Right ventricle myocardium inferior (tissue), 1 donor: ENCODE measurements at regions of chr15 and their contacts with region 1.

Region 1: GRCh38 chr15:81633889-81634288 is 259.9 kb upstream of the TMC3 start:
- DNase-seq: no peak
- ATAC-seq: no peak

Region 2: DNA sequence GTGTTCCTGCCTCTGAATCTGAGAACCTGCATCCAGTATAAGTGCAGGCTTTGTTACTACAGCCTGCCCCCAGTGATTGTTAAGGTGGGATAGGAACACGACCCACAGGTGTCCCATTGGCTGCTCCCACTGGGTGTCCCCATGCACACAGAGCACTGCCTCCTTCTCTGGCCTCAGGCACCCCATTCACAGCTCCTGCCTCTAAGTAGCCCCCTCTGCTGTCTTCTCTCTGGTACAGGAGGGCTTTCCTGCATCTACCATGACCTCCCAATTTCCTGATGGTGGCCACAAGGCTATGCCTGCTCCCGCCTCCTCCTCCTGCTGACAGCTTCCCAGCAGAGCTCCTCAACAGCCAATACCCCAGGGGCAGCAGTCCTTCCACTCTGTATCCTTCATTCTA is 21.3 kb before region 1 on chr15:
- intact Hi-C with region 1: loop called (anchors 2 kb)
- DNase-seq: no peak
- ATAC-seq: no peak

Region 3: DNA sequence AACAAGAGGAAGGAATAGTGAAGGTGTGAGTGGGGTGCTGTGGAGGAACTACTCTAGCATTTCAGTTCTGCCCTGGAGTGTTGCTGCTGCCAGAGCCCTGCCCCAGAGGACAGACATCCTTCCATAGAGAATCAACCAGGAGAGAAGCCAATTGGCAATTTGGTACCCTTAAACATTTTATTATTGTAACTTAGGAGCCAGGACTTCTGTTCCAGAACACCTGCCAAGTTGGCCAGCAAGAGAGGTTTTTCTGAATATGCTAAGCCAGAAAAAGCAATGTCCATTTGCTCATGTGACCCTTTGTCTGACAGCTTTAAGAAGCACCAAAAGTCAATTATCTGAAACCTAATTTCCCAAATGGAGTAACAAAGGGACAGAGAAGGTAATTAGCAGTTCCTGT is 147.1 kb after region 1 on chr15:
- intact Hi-C with region 1: no loop called
- DNase-seq: no peak
- ATAC-seq: no peak